ENCODE measurements at regions of chr2 and their contacts with region 1.

Region 1: DNA sequence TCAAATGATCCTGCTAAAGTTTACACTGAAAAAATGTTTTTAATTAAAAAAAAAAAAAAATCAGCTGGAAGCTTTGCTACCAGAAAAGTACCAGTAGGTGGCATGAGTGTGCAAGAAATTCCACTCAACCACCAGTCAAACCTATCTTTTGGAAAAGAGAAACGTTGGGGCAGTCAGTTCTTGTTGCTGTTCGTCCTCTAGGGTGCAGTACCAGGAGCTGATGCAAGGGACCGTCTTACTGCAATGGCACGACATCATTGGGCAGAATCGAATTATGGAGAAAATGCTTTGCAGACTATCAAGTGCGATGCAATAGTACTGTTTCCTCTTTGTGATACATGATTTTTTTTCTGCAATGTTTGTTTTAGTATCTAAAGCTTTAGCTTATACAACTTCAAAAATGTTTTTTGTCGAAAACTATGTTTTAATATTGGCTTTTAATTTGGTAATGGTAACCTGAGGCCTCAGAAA is 18.3 kb downstream of the YPEL5 start:
- DNase-seq: peak in 6 of 10 donors; percentile 26 to 73 (median 41)
- H3K4me3 ChIP-seq: no peak overlapping the region
- H3K27ac ChIP-seq: no peak overlapping the region
- H3K27me3 ChIP-seq: no peaks in the 10 kb centered on the region
- CTCF ChIP-seq: peak; percentile 88 to 97 (median 94)

Region 2: DNA sequence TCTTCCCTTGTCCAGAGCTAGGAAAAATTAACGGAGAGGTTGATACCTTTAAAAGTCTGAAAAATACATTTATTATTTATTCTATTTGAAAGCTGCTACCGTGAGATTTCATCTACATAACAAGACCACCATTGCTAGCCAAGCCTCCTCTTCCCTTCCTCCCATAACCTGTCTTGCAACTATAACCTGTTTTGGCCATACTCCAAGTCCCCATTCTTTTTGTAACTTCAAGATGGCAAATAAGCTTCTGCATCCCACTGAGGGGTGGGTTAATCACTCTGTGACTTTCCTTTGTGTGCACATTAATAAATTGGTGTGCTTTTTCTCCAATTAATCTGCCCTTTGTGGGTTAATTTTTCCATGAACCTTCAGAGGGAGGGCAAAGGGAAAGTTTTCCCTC is 623.3 kb before region 1 on chr2:
- intact Hi-C with region 1: no loop called
- DNase-seq: no peak
- H3K4me3 ChIP-seq: no peak overlapping the region
- H3K27ac ChIP-seq: no peak overlapping the region
- H3K27me3 ChIP-seq: peaks cover 0 to 30% (median 0%) of the 10 kb centered on the region in 45 donors
- CTCF ChIP-seq: no peak

Region 3: GRCh38 chr2:29855924-29856639 is 309.0 kb before region 1 on chr2:
- intact Hi-C with region 1: no loop called
- DNase-seq: no peak
- H3K4me3 ChIP-seq: no peak overlapping the region
- H3K27ac ChIP-seq: no peak overlapping the region
- H3K27me3 ChIP-seq: peaks cover 0 to 38% (median 0%) of the 10 kb centered on the region in 45 donors
- CTCF ChIP-seq: no peak

Region 4: DNA sequence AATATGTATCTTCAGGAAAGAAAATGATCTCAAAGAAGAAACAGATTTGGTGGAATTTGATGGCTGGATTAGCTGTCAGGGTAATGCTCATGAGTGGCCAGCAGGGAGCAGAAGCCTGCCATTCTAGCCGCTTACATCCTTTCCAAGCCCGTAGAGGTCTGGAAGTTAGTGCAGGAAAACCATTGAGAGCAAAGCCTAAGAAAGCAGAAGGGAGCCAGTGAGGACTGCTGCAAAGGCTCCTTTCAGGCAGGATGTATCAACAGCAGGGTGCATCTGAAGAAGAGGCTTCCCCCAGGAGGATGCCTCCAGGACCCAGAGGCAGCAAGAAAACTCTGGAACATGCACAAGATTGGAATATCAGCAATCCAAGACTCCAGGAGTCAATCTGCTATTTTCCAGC is 43.4 kb after region 1 on chr2:
- intact Hi-C with region 1: loop called in 1 of 2 experiments (anchors 5 kb)
- DNase-seq: peak in 9 of 10 donors; percentile 49 to 73 (median 65)
- H3K4me3 ChIP-seq: no peak overlapping the region
- H3K27ac ChIP-seq: peak overlapping the region in 1 of 59 donors; percentile 6
- H3K27me3 ChIP-seq: no peaks in the 10 kb centered on the region
- CTCF ChIP-seq: peak; percentile 74 to 98 (median 91)

Measured in dorsolateral prefrontal cortex (tissue), 120 donors.